ENCODE measurements at regions of chr16 and their contacts with region 1.

Region 1: GRCh38 chr16:5234295-5235050 is 136.9 kb upstream of the EEF2KMT start:
- DNase-seq: no peak
- ATAC-seq: no peak
- H3K4me3 ChIP-seq: no peak overlapping the region
- H3K27ac ChIP-seq: no peak overlapping the region
- H3K4me1 ChIP-seq: no peaks in the 10 kb centered on the region
- H3K27me3 ChIP-seq: no peaks in the 10 kb centered on the region

Region 2: GRCh38 chr16:4679850-4680636 is 554.4 kb before region 1 on chr16:
- intact Hi-C with region 1: no loop called
- DNase-seq: peak; percentile 53 to 91 (median 91)
- ATAC-seq: peak; percentile 17 to 22
- H3K4me3 ChIP-seq: no peak overlapping the region
- H3K27ac ChIP-seq: peak overlapping the region; percentile 74
- H3K4me1 ChIP-seq: peaks cover 2% of the 10 kb centered on the region
- H3K27me3 ChIP-seq: no peaks in the 10 kb centered on the region

Region 3: GRCh38 chr16:5615868-5616642 is 381.6 kb after region 1 on chr16:
- intact Hi-C with region 1: loop called in 1 of 4 experiments (anchors 10 kb)
- DNase-seq: peak; percentile 34 to 68 (median 54)
- ATAC-seq: peak; percentile 54 to 76
- H3K4me3 ChIP-seq: no peak overlapping the region
- H3K27ac ChIP-seq: no peak overlapping the region
- H3K4me1 ChIP-seq: no peaks in the 10 kb centered on the region
- H3K27me3 ChIP-seq: no peaks in the 10 kb centered on the region

Region 4: GRCh38 chr16:6643080-6643686 is 1408.7 kb after region 1 on chr16:
- intact Hi-C with region 1: loop called in 1 of 4 experiments (anchors 10 kb)
- DNase-seq: peak in 1 of 3 donors; percentile 47
- ATAC-seq: no peak
- H3K4me3 ChIP-seq: no peak overlapping the region
- H3K27ac ChIP-seq: no peak overlapping the region
- H3K4me1 ChIP-seq: no peaks in the 10 kb centered on the region
- H3K27me3 ChIP-seq: no peaks in the 10 kb centered on the region